ENCODE measurements at regions of chr5 and their contacts with region 1.

Region 1: GRCh38 chr5:181173420-181174342 is 26.3 kb downstream of the OR2V2 start:
- DNase-seq: no peak
- H3K4me3 ChIP-seq: no peak overlapping the region
- H3K27me3 ChIP-seq: peaks cover 3% of the 10 kb centered on the region; the same call in 1 of the 2 replicates
- CTCF ChIP-seq: no peak

Region 2: GRCh38 chr5:181184857-181185251 is 11.2 kb after region 1 on chr5:
- CTCF ChIA-PET with region 1: interaction called, 11 read pairs
- POLR2A ChIA-PET with region 1: no interaction called
- DNase-seq: no peak
- H3K4me3 ChIP-seq: peak overlapping the region; percentile 10; the same call in 1 of the 2 replicates
- H3K27me3 ChIP-seq: no peaks in the 10 kb centered on the region
- CTCF ChIP-seq: no peak

Measured in BJ (cell line).